HEK293 (cell line): ENCODE measurements at regions of chr22 and their contacts with region 1.

Region 1: GRCh38 chr22:38460426-38460840 is 5.4 kb upstream of the KCNJ4 start:
- H3K4me3 ChIP-seq: no peak overlapping the region
- H3K27ac ChIP-seq: no peak overlapping the region
- H3K4me1 ChIP-seq: no peaks in the 10 kb centered on the region
- CTCF ChIP-seq: no peak

Region 2: GRCh38 chr22:38481162-38481870 is 20.9 kb after region 1 on chr22:
- CTCF ChIA-PET with region 1: no interaction called
- POLR2A ChIA-PET with region 1: interaction called, 10 read pairs
- H3K4me3 ChIP-seq: no peak overlapping the region
- H3K27ac ChIP-seq: no peak overlapping the region
- H3K4me1 ChIP-seq: no peaks in the 10 kb centered on the region
- CTCF ChIP-seq: no peak